ENCODE measurements at regions of chr14 and their contacts with region 1.

Region 1: DNA sequence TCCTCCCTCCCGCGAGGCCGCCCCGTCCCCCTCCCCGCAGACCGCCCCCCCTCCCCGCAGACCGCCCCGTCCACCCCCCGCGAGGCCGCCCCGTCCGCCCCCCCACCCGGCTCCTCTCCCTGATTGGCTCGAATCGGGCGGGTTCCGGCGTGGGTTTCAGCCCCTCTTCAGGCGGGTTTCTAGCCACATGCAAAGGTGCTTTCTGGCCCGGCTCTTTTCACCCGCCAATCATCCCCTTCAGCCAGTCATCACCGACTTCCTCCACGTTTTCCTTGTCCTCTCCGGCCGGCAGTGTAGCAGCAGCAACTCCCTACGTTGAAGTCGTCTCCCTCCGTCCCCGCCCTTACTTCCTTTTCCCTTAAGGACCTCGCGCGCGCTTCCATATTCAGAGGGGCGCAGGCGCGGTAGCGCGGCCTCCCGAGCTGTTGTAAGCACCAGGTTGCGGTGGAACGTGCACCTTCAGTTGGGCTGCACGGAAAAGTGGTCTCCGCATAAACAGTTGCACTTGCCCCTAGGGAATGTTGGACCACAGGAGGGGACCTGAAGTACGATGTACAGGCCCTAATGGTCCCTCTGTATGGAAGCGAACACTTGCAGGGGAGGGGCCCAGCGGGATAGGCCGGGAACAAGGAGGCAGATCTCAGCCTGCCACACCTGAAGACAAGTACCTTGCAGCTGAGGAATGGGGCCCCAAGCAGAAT is 44.6 kb upstream of the ESR2 start:
- DNase-seq: peak; percentile 95 to 97 (median 95)
- ATAC-seq: peak; percentile 90 to 97 (median 96)
- H3K4me3 ChIP-seq: peak overlapping the region; percentile 49 to 98 (median 81)
- H3K27ac ChIP-seq: peak overlapping the region in 11 of 12 donors; percentile 69 to 89 (median 80)
- H3K4me1 ChIP-seq: peaks cover 0 to 17% (median 7%) of the 10 kb centered on the region in 12 donors
- H3K27me3 ChIP-seq: no peaks in the 10 kb centered on the region
- CTCF ChIP-seq: no peak
- POLR2A ChIP-seq: peak in 1 of 2 donors; percentile 74

Region 2: DNA sequence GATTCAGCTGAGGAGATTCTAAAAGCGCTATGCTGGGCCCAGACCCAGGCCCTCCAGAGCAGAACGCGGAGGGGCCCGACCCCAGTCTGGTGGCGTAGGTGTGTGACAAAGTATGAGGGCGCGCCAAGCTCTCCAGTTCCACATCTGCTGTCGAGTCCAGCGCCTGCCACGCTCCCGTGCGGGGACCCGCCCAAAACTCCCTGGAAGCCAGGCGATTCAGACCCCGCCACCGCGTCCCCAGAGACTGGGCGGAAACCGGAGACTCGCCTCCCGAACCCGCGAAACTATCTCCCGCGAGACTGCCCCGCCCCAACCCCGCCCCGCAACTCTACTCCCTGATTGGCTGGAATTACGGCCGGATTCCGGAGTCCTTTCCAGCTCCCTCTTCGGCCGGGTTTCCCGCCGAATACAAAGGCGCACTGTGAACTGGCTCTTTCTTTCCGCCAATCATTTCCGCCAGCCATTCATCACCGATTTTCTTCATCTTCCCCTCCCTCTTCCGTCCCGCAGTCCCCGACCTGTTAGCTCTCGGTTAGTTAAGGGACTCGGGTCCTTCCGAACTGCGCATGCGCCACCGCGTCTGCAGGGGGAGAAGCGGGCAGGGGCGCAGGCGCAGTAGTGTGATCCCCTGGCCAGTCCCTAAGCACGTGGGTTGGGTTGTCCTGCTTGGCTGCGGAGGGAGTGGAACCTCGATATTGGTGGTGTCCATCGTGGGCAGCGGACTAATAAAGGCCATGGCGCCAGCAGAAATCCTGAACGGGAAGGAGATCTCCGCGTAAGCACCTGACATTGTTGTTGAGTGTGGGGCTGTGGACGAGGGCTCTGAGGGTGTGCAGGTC is 49.1 kb after region 1 on chr14 and contains the start of gene MTHFD1:
- intact Hi-C with region 1: loop called in 5 of 10 experiments (anchors 2 to 5 kb)
- DNase-seq: peak; percentile 98 to 100 (median 99)
- ATAC-seq: peak; percentile 93 to 96 (median 94)
- H3K4me3 ChIP-seq: peak within 1 kb of the TSS; percentile 51 to 84 (median 66)
- H3K27ac ChIP-seq: peak within 1 kb of the TSS; percentile 33 to 88 (median 79)
- H3K4me1 ChIP-seq: peaks cover 0 to 24% (median 18%) of the 10 kb centered on the region in 12 donors
- H3K27me3 ChIP-seq: no peaks in the 10 kb centered on the region
- CTCF ChIP-seq: peak in 1 of 12 donors; percentile 15
- POLR2A ChIP-seq: peak in 1 of 2 donors; percentile 34
- total RNA-seq, gene MTHFD1: 39.0 to 72.1 (median 60.4) TPM

Region 3: DNA sequence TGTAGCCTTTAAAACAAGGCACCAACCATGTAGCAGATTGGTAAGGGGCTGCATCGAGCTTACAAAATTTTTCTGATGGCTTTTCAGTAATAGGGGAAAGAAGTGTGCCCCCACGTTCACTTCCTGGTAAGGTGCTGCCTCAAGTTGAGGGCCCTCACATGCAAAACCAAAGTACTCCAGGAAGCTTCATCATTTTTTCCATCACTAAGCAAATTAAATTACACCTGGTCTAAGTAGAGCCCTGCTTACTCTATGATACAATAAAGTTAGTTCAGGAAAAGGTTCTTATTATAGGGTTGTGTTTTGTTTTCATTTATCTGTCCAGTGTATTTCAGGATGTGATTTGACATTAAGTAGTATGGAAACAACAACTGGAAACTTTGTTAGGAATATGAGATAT is 111.5 kb after region 1 on chr14:
- intact Hi-C with region 1: no loop called
- DNase-seq: no peak
- ATAC-seq: no peak
- H3K4me3 ChIP-seq: no peak overlapping the region
- H3K27ac ChIP-seq: no peak overlapping the region
- H3K4me1 ChIP-seq: peaks cover 0 to 7% (median 0%) of the 10 kb centered on the region in 12 donors
- H3K27me3 ChIP-seq: no peaks in the 10 kb centered on the region
- CTCF ChIP-seq: no peak
- POLR2A ChIP-seq: no peak

Region 4: DNA sequence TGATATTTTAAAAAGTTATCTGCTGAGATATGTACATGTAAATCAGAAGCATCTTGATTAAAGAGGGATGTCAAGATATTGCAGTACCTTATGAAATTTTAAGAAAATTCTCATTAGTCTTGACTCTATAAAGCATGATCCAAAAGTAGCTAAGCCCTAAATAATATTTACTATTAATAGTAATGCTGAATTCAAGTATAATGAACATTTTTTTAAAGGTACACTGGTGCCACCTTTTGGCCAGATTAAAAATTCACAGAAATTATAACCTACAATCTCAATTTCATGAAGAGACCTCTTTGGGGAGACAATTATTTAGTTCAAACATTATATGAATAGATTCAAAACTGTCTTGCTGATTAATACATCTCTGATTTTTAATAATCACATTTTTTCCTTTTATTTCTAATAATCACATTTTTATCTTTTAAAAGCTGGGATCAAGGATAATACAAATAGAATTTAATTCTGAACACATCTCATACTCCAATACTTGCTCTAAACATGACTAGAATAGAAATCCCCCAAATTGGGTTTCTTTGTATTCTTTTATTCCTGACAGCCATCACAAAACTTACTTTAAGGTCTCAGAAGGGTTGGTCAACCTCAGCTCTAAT is 140.0 kb after region 1 on chr14:
- intact Hi-C with region 1: loop called in 4 of 10 experiments (anchors 5 to 10 kb)
- DNase-seq: no peak
- ATAC-seq: no peak
- H3K4me3 ChIP-seq: no peak overlapping the region
- H3K27ac ChIP-seq: no peak overlapping the region
- H3K4me1 ChIP-seq: peaks cover 0 to 4% (median 0%) of the 10 kb centered on the region in 12 donors
- H3K27me3 ChIP-seq: no peaks in the 10 kb centered on the region
- CTCF ChIP-seq: peak in 10 of 12 donors; percentile 15 to 64 (median 48)
- POLR2A ChIP-seq: no peak

Region 5: GRCh38 chr14:64503478-64504309 is 164.9 kb after region 1 on chr14 and contains the start of gene ZBTB25:
- intact Hi-C with region 1: loop called in 1 of 10 experiments (anchors 10 kb)
- DNase-seq: peak; percentile 87 to 95 (median 93)
- ATAC-seq: peak; percentile 76 to 90 (median 82)
- H3K4me3 ChIP-seq: peak within 1 kb of the TSS; percentile 68 to 97 (median 89)
- H3K27ac ChIP-seq: peak within 1 kb of the TSS; percentile 96 to 100 (median 98)
- H3K4me1 ChIP-seq: peaks cover 8 to 74% (median 56%) of the 10 kb centered on the region in 12 donors
- H3K27me3 ChIP-seq: no peaks in the 10 kb centered on the region
- CTCF ChIP-seq: peak in 1 of 12 donors; percentile 15
- POLR2A ChIP-seq: peak in 1 of 2 donors; percentile 90
- total RNA-seq, gene ZBTB25: 12.5 to 28.0 (median 19.0) TPM

Region 6: DNA sequence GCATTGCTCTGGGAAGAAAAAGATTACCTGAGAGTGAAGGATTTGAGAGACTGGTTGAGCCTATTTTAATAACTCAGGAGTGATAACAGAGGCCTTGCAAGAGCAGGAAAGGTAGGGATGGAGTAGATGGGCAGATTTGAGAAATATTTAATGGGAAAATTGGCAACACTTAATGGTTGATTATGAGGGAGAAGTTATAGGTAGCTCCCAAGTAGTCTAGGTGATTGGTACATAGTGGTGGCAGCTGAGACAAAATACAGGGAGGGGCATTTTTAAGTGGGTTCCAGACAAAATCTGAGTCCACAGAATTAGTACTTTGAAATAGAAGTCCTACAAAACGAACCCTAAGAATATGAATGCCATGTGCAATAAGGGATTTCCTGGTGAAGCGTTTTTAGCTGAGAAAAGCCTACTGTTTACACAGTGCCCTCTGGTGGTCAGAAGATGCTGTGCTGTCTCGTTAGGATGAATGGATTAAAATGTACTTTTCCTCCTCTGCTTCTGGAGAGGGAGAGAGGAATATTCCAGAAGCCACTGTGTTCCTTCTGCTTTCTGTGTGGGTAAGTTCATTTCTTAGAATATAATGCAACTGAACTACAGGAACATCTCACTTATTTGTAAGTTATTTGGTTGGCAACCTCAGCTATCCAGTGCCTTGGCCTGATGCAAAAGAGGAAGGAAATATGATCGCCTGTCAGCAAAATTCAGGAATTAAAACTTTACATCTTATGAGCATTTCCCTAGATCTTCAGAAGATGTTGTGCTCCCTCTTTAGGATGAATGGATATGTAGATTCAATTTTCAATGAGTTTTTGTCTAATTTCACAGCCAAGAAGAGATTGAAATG is 172.3 kb after region 1 on chr14:
- intact Hi-C with region 1: loop called in 2 of 10 experiments (anchors 10 kb)
- DNase-seq: peak in 4 of 5 donors; percentile 40 to 71 (median 58)
- ATAC-seq: peak; percentile 18 to 75 (median 55)
- H3K4me3 ChIP-seq: peak overlapping the region in 1 of 12 donors; percentile 7
- H3K27ac ChIP-seq: peak overlapping the region in 2 of 12 donors; percentile 15 to 86
- H3K4me1 ChIP-seq: peaks cover 3 to 84% (median 55%) of the 10 kb centered on the region in 12 donors
- H3K27me3 ChIP-seq: no peaks in the 10 kb centered on the region
- CTCF ChIP-seq: peak; percentile 88 to 93 (median 91)
- POLR2A ChIP-seq: no peak

Region 7: DNA sequence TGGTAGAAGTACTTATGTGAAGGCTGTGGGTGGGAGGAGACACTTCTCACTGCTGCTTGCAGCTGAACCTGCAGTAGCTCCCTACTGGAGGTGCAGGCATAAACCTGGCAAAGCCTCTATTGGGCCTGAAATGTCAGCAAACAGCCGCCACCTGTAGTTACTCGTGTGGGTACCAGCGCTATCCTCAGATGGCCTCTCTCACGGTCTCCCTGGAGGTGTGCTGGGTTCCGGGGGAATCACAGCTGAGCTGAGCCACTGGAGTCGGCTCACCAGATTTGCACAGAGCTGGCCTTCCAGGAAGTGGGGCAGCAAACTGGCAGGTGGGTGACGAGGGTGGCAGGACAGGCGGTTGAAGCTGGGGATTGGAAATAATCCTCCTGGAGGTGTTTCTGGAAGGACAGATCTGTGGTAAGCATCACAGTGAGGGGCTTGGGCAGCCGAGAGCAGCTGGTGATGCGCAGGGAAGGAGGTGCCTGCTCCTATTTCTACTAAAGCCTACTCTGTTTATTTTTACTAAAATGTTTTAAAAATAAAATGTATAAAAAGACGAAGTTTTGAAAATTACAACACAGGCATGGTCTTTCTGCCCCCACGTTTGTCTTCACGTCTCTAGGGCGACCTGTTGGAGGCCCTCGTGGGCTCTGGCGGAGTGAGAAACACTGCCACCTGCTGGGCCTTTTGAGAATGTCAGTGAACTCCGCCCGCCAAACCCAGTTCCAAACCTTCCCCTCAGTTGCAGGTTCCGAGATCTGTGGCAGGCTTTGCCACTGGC is 297.6 kb after region 1 on chr14:
- intact Hi-C with region 1: loop called in 8 of 10 experiments (anchors 5 to 10 kb)
- DNase-seq: peak; percentile 59 to 77 (median 72)
- ATAC-seq: peak; percentile 82 to 91 (median 90)
- H3K4me3 ChIP-seq: no peak overlapping the region
- H3K27ac ChIP-seq: peak overlapping the region in 1 of 12 donors; percentile 33
- H3K4me1 ChIP-seq: peaks cover 0 to 9% (median 0%) of the 10 kb centered on the region in 12 donors
- H3K27me3 ChIP-seq: no peaks in the 10 kb centered on the region
- CTCF ChIP-seq: peak; percentile 84 to 97 (median 89)
- POLR2A ChIP-seq: no peak

Measured in heart left ventricle (tissue), 16 donors.